Colonic mucosa (tissue), 4 donors: ENCODE measurements at regions of chr10 and their contacts with region 1.

Region 1: GRCh38 chr10:19819419-19820033 is 3.3 kb downstream of the PLXDC2 start:
- DNase-seq: peak; percentile 71
- H3K4me3 ChIP-seq: no peak overlapping the region
- H3K27ac ChIP-seq: no peak overlapping the region
- H3K4me1 ChIP-seq: peaks cover 4% of the 10 kb centered on the region
- H3K27me3 ChIP-seq: no peaks in the 10 kb centered on the region
- CTCF ChIP-seq: peak; percentile 84

Region 2: DNA sequence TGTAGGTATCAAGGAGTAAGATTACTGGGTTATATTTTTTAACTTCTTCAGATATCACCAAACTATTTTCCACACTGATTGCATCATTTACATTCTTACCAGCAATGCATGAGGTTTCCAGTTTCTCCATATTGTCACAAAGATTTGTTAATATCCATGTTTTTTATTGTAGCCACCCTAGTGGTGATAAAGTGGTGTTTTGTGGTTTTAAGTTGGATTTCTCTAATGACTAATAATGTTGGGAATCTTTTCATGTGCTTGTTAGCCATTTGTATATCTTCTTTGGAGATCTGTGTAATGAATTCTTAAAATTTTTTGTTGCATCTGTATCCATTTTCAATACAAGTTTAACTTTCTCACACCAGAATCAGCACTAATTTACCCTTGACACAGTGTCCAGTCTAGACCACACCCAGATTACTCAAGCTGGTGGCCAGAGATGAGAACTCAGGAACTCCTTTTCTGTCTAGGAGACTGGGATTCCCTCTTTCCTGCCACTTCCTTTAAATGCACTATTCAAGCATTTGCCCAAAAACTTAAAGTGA is 70.3 kb before region 1 on chr10:
- intact Hi-C with region 1: no loop called
- DNase-seq: no peak
- H3K4me3 ChIP-seq: no peak overlapping the region
- H3K27ac ChIP-seq: no peak overlapping the region
- H3K4me1 ChIP-seq: no peaks in the 10 kb centered on the region
- H3K27me3 ChIP-seq: no peaks in the 10 kb centered on the region
- CTCF ChIP-seq: no peak

Region 3: GRCh38 chr10:19958787-19959186 is 139.3 kb after region 1 on chr10:
- intact Hi-C with region 1: no loop called
- DNase-seq: no peak
- H3K4me3 ChIP-seq: no peak overlapping the region
- H3K27ac ChIP-seq: no peak overlapping the region
- H3K4me1 ChIP-seq: no peaks in the 10 kb centered on the region
- H3K27me3 ChIP-seq: no peaks in the 10 kb centered on the region
- CTCF ChIP-seq: no peak

Region 4: DNA sequence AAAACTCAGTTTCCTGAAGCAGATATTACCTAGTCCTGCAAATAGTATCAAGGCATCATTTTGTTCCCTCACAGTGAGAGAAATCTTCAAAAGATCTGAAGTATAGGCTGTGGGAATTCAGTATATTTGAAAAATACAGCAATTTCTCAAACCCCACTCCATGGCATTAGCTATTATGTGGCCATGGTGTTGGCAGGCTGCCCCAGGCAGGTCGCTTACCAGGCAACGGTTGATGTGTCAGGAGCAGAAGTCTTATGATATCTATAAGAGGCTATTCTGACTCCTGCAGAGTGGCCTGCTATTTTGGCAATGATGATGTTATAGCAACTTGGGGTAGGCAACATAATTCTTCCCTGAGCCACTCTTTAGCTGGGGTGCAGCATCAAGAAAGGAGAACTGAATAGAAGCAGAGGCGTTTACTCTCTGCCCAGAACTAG is 184.6 kb after region 1 on chr10:
- intact Hi-C with region 1: loop called (anchors 10 kb)
- DNase-seq: no peak
- H3K4me3 ChIP-seq: no peak overlapping the region
- H3K27ac ChIP-seq: peak overlapping the region; percentile 58
- H3K4me1 ChIP-seq: no peaks in the 10 kb centered on the region
- H3K27me3 ChIP-seq: no peaks in the 10 kb centered on the region
- CTCF ChIP-seq: no peak

Region 5: GRCh38 chr10:20094226-20094976 is 274.9 kb after region 1 on chr10:
- intact Hi-C with region 1: loop called (anchors 5 kb)
- DNase-seq: no peak
- H3K4me3 ChIP-seq: no peak overlapping the region
- H3K27ac ChIP-seq: no peak overlapping the region
- H3K4me1 ChIP-seq: no peaks in the 10 kb centered on the region
- H3K27me3 ChIP-seq: no peaks in the 10 kb centered on the region
- CTCF ChIP-seq: no peak

Region 6: GRCh38 chr10:20659225-20659624 is 839.7 kb after region 1 on chr10:
- intact Hi-C with region 1: no loop called
- DNase-seq: no peak
- H3K4me3 ChIP-seq: no peak overlapping the region
- H3K27ac ChIP-seq: no peak overlapping the region
- H3K4me1 ChIP-seq: no peaks in the 10 kb centered on the region
- H3K27me3 ChIP-seq: no peaks in the 10 kb centered on the region
- CTCF ChIP-seq: no peak

Region 7: GRCh38 chr10:20768843-20769242 is 949.3 kb after region 1 on chr10:
- intact Hi-C with region 1: loop called (anchors 10 kb)
- DNase-seq: no peak
- H3K4me3 ChIP-seq: no peak overlapping the region
- H3K27ac ChIP-seq: no peak overlapping the region
- H3K4me1 ChIP-seq: no peaks in the 10 kb centered on the region
- H3K27me3 ChIP-seq: no peaks in the 10 kb centered on the region
- CTCF ChIP-seq: peak; percentile 28